Activated T-helper 2 cell treated with anti-CD3 and anti-CD28 coated beads, Interferon-gamma antibody, Interleukin-2, Interleukin-4, amounts not matched to agents 10 μg/mL and 5 μg/mL and 100 μg/mL, durations not matched to agents 14 hours and 24 hours and 36 hours (primary cell): ENCODE measurements at regions of chr18 and their contacts with region 1.

Region 1: GRCh38 chr18:74116633-74117554 is 30.7 kb downstream of the FBXO15 start:
- DNase-seq: no peak
- H3K4me3 Mint-ChIP-seq: no peak overlapping the region
- H3K27ac Mint-ChIP-seq: no peak overlapping the region
- H3K4me1 Mint-ChIP-seq: peaks cover 20% of the 10 kb centered on the region
- H3K27me3 Mint-ChIP-seq: peaks cover 5% of the 10 kb centered on the region

Region 2: DNA sequence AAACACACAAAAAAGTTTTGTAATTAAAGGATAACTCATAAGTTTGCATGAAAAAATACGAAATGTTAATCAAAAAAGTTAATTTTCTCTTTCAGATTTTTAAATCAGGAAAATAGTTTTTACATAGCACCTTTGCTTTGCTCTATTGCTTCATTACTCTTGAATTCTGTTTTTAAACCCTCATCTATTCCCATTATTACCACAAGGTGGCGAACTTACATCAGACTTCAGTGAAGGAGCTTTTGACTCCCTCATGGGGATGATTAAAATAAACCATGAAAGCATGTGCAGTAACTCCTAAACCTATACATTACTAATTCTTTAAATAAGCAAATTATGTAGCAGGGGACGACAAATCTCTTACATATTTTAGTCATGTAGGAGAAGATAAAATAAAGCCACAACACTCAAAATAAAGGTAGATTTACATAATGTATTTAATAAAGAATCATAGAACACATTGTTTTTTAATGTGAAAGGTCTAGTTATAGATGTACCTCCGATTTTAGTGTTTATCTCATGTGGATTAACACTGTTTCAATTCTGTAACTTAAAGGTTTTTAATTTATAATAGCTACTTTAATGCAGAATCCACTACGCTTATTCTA is 1354.3 kb before region 1 on chr18:
- intact Hi-C with region 1: loop called (anchors 5 kb)
- DNase-seq: no peak
- H3K4me3 Mint-ChIP-seq: no peak overlapping the region
- H3K27ac Mint-ChIP-seq: no peak overlapping the region
- H3K4me1 Mint-ChIP-seq: no peaks in the 10 kb centered on the region
- H3K27me3 Mint-ChIP-seq: no peaks in the 10 kb centered on the region

Region 3: DNA sequence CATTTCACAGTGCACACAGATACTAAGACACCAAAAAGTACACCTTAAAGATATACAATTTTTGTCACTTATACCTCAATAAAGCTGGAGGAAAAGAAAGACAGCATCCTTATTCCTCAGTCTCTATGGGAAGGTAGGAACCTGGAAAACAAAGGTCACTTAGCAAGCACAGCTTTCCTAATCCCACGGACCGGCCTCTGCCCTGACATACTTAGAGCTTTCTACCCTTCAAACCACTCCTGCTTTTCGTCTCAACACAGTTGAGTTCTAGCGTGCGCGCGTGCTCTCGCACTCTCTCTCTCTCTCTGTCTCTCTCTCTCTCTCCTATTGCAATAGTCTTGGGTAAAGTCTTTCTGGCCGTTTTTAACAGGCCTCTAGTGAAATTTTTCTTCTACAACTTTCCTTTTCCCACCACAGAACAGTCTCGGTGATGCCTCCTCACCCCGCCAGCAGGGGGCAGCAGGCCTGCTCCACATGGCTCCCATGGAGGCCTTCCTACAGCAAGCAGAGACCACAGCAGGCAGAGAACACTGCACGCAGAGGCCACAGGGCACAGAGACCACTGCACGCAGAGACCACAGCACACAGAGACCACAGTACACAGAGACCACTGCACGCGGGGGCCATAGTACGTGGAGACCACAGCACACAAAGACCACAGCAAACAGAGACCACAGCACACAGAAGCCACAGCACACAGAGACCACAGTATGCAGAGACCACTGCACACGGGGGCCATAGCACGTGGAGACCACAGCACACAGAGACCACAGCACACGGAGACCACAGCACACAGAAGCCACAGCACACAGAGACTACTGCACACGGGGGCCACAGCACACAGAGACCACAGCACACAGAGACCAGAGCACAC is 76.2 kb before region 1 on chr18:
- intact Hi-C with region 1: loop called (anchors 1 kb)
- DNase-seq: peak; percentile 56
- H3K4me3 Mint-ChIP-seq: no peak overlapping the region
- H3K27ac Mint-ChIP-seq: no peak overlapping the region
- H3K4me1 Mint-ChIP-seq: no peaks in the 10 kb centered on the region
- H3K27me3 Mint-ChIP-seq: no peaks in the 10 kb centered on the region

Region 4: DNA sequence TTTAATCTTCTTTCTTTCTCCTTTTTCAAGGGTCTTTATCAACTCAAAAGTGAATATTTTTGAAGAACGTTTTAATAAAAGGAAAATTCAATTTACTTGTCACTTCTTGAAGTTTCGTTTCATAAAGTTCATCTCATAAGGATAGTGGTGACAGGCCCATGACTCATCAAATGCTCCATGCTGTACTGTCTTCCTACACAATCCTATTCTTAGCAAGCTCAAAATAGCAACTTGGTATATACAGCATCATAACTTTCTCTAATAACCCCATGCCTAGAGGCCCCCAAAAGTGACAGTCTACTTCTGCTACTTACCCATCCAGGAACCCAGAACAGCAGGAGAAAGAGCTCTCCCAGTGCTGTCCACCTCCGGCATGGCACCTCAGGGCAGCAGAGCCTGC is 23.0 kb after region 1 on chr18:
- intact Hi-C with region 1: loop called (anchors 1 kb)
- DNase-seq: no peak
- H3K4me3 Mint-ChIP-seq: peak overlapping the region; percentile 67
- H3K27ac Mint-ChIP-seq: peak overlapping the region; percentile 92
- H3K4me1 Mint-ChIP-seq: peaks cover 36% of the 10 kb centered on the region
- H3K27me3 Mint-ChIP-seq: peaks cover under 1% of the 10 kb centered on the region

Region 5: GRCh38 chr18:74217476-74218143 is 100.7 kb after region 1 on chr18:
- intact Hi-C with region 1: no loop called
- DNase-seq: no peak
- H3K4me3 Mint-ChIP-seq: no peak overlapping the region
- H3K27ac Mint-ChIP-seq: no peak overlapping the region
- H3K4me1 Mint-ChIP-seq: no peaks in the 10 kb centered on the region
- H3K27me3 Mint-ChIP-seq: peaks cover 1% of the 10 kb centered on the region

Region 6: GRCh38 chr18:74609535-74609934 is 492.6 kb after region 1 on chr18:
- intact Hi-C with region 1: no loop called
- DNase-seq: no peak
- H3K4me3 Mint-ChIP-seq: no peak overlapping the region
- H3K27ac Mint-ChIP-seq: no peak overlapping the region
- H3K4me1 Mint-ChIP-seq: peaks cover 5% of the 10 kb centered on the region
- H3K27me3 Mint-ChIP-seq: no peaks in the 10 kb centered on the region